Activated naive CD4-positive, alpha-beta T cell treated with anti-CD3 and anti-CD28 coated beads for 36 hours (primary cell): ENCODE measurements at regions of chr14 and their contacts with region 1.

Region 1: GRCh38 chr14:64891839-64892375 is 12.2 kb upstream of the SPTB start:
- DNase-seq: peak; percentile 49
- H3K4me3 Mint-ChIP-seq: no peak overlapping the region
- H3K27ac Mint-ChIP-seq: no peak overlapping the region
- H3K4me1 Mint-ChIP-seq: no peaks in the 10 kb centered on the region
- H3K27me3 Mint-ChIP-seq: no peaks in the 10 kb centered on the region

Region 2: DNA sequence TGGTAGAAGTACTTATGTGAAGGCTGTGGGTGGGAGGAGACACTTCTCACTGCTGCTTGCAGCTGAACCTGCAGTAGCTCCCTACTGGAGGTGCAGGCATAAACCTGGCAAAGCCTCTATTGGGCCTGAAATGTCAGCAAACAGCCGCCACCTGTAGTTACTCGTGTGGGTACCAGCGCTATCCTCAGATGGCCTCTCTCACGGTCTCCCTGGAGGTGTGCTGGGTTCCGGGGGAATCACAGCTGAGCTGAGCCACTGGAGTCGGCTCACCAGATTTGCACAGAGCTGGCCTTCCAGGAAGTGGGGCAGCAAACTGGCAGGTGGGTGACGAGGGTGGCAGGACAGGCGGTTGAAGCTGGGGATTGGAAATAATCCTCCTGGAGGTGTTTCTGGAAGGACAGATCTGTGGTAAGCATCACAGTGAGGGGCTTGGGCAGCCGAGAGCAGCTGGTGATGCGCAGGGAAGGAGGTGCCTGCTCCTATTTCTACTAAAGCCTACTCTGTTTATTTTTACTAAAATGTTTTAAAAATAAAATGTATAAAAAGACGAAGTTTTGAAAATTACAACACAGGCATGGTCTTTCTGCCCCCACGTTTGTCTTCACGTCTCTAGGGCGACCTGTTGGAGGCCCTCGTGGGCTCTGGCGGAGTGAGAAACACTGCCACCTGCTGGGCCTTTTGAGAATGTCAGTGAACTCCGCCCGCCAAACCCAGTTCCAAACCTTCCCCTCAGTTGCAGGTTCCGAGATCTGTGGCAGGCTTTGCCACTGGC is 255.5 kb before region 1 on chr14:
- CTCF ChIA-PET with region 1: interaction called, 10 read pairs
- intact Hi-C with region 1: no loop called
- DNase-seq: peak; percentile 81
- H3K4me3 Mint-ChIP-seq: no peak overlapping the region
- H3K27ac Mint-ChIP-seq: no peak overlapping the region
- H3K4me1 Mint-ChIP-seq: no peaks in the 10 kb centered on the region
- H3K27me3 Mint-ChIP-seq: no peaks in the 10 kb centered on the region

Region 3: GRCh38 chr14:64764641-64765520 is 127.0 kb before region 1 on chr14:
- CTCF ChIA-PET with region 1: interaction called, 41 read pairs
- intact Hi-C with region 1: loop called (anchors 5 kb)
- DNase-seq: peak; percentile 74
- H3K4me3 Mint-ChIP-seq: peak overlapping the region; percentile 45
- H3K27ac Mint-ChIP-seq: no peak overlapping the region
- H3K4me1 Mint-ChIP-seq: peaks cover 6% of the 10 kb centered on the region
- H3K27me3 Mint-ChIP-seq: no peaks in the 10 kb centered on the region

Region 4: DNA sequence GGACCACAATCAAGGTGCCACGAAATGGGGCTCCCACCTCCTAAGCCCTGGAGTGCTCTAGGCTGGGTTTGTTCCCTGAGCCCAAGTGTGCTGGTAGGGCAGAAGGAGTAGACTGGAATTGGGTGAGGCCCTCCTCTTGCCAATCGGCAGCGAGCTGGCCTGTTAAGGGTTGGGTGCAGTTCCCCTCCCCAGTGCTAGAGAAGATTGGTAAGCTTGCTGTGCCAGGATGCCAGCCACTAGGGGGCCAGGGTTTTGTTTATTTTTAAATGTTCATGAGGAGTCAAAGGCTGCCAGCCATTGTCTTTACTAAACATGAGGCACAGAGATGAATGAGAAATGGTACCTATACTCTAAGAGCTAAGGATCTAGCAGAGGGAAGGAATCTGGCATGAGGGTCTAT is 91.9 kb before region 1 on chr14:
- CTCF ChIA-PET with region 1: interaction called, 19 read pairs
- intact Hi-C with region 1: loop called (anchors 5 kb)
- DNase-seq: no peak
- H3K4me3 Mint-ChIP-seq: no peak overlapping the region
- H3K27ac Mint-ChIP-seq: no peak overlapping the region
- H3K4me1 Mint-ChIP-seq: no peaks in the 10 kb centered on the region
- H3K27me3 Mint-ChIP-seq: no peaks in the 10 kb centered on the region

Region 5: DNA sequence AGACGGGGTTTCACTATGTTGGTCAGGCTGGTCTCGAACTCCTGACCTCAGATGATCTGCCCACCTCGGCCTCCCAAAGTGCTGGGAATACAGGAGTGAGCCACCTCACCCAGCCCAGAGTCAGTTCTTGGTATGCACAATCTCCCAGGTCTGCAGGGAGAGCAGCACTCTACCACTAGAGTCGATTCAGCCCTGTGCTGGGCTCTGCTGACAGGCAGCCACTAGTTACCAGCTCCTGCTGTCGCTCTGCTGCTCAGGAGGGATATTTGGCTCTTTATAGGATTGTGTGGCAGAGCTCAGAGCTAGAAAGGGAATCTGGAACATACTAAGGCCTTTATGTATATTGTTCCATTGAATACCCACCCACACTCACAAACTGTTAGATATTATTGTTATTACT is 56.5 kb before region 1 on chr14:
- CTCF ChIA-PET with region 1: interaction called, 11 read pairs
- intact Hi-C with region 1: no loop called
- DNase-seq: no peak
- H3K4me3 Mint-ChIP-seq: no peak overlapping the region
- H3K27ac Mint-ChIP-seq: no peak overlapping the region
- H3K4me1 Mint-ChIP-seq: no peaks in the 10 kb centered on the region
- H3K27me3 Mint-ChIP-seq: peaks cover 6% of the 10 kb centered on the region

Region 6: GRCh38 chr14:64870160-64870559 is 21.7 kb before region 1 on chr14:
- CTCF ChIA-PET with region 1: interaction called, 14 read pairs
- intact Hi-C with region 1: no loop called
- DNase-seq: no peak
- H3K4me3 Mint-ChIP-seq: no peak overlapping the region
- H3K27ac Mint-ChIP-seq: no peak overlapping the region
- H3K4me1 Mint-ChIP-seq: no peaks in the 10 kb centered on the region
- H3K27me3 Mint-ChIP-seq: peaks cover 10% of the 10 kb centered on the region

Region 7: GRCh38 chr14:64928239-64929013 is 36.5 kb after region 1 on chr14:
- CTCF ChIA-PET with region 1: interaction called, 10 read pairs
- intact Hi-C with region 1: no loop called
- DNase-seq: no peak
- H3K4me3 Mint-ChIP-seq: no peak overlapping the region
- H3K27ac Mint-ChIP-seq: no peak overlapping the region
- H3K4me1 Mint-ChIP-seq: peaks cover 25% of the 10 kb centered on the region
- H3K27me3 Mint-ChIP-seq: no peaks in the 10 kb centered on the region